Activated CD8-positive, alpha-beta T cell treated with anti-CD3 and anti-CD28 coated beads for 36 hours (primary cell): ENCODE measurements at regions of chr5 and their contacts with region 1.

Region 1: GRCh38 chr5:95781101-95781583 is 41.4 kb downstream of the GLRX start:
- DNase-seq: peak; percentile 86
- ATAC-seq: peak; percentile 98
- H3K4me3 Mint-ChIP-seq: peak overlapping the region; percentile 38
- H3K27ac Mint-ChIP-seq: peak overlapping the region; percentile 71
- H3K4me1 Mint-ChIP-seq: peaks cover 7% of the 10 kb centered on the region
- H3K27me3 Mint-ChIP-seq: peaks cover 2% of the 10 kb centered on the region
- CTCF ChIP-seq: peak; percentile 99

Region 2: DNA sequence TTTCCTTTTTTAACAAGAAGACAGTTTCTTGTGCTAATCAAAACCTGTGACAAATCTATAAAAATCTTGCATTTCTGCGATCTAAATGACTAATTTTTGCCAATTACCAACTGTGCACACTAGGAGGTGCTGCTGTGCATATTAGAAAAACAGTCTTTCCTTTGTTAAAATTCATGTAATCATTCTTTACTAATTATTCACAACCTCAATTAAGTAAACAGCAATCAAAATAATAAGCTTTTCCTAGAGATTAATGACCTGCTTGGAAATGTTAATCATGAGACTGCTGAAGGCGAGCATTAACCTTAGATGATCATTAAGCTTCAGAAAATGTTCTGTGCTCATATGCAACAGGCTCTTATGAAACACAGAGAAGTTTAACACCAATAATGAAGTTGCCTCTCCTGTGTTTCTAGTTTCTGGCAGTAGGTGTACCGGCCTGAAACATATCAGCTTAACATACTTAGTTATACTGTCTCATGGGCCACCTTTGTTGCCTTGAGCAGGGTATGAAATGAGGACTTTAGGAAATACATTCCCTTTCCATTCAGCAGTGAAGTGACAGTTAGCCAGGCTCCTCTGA is 116.8 kb before region 1 on chr5:
- CTCF ChIA-PET with region 1: interaction called, 25 read pairs
- POLR2A ChIA-PET with region 1: no interaction called
- intact Hi-C with region 1: loop called (anchors 5 kb)
- DNase-seq: peak; percentile 52
- ATAC-seq: peak; percentile 61
- H3K4me3 Mint-ChIP-seq: no peak overlapping the region
- H3K27ac Mint-ChIP-seq: no peak overlapping the region
- H3K4me1 Mint-ChIP-seq: peaks cover 3% of the 10 kb centered on the region
- H3K27me3 Mint-ChIP-seq: no peaks in the 10 kb centered on the region
- CTCF ChIP-seq: peak; percentile 92

Region 3: DNA sequence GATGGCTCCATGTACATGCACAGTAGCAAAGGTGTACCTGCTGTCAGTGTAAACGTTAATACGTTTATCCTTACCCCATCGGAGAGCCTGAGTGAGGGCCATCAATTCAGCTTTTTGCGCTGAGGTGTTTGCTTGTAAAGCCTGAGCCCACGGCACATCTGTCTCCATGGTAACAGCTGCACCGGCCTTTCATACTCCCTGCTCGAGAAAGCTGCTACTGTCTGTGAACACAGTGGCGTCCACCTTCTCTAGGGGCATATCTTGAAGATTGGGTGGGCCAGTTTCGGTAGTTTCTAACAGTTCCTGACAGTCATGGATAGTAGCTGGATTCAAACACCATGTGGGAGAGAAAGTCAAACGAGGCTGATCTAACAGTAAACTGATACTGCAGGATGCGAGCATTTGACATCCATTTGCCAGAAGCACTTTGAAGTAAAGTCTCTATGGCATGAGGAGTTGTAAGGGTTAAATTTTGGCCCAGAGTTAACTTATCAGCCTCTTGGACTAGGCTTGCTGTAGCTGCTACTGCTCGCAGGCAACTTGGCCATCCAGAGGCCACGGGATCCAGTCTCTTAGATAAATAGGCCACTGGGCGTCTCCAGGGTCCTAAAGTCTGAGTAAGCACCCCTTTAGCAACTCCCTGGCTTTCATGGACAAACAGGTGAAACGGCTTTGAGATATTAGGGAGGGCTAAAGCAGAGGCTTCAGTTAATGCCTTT is 71.0 kb before region 1 on chr5:
- CTCF ChIA-PET with region 1: no interaction called
- POLR2A ChIA-PET with region 1: no interaction called
- intact Hi-C with region 1: no loop called
- DNase-seq: no peak
- ATAC-seq: no peak
- H3K4me3 Mint-ChIP-seq: no peak overlapping the region
- H3K27ac Mint-ChIP-seq: no peak overlapping the region
- H3K4me1 Mint-ChIP-seq: peaks cover 8% of the 10 kb centered on the region
- H3K27me3 Mint-ChIP-seq: peaks cover 6% of the 10 kb centered on the region
- CTCF ChIP-seq: no peak

Region 4: GRCh38 chr5:95760273-95761191 is 20.6 kb before region 1 on chr5:
- CTCF ChIA-PET with region 1: interaction called, 14 read pairs
- POLR2A ChIA-PET with region 1: no interaction called
- intact Hi-C with region 1: no loop called
- DNase-seq: peak; percentile 51
- ATAC-seq: peak; percentile 89
- H3K4me3 Mint-ChIP-seq: peak overlapping the region; percentile 66
- H3K27ac Mint-ChIP-seq: peak overlapping the region; percentile 90
- H3K4me1 Mint-ChIP-seq: peaks cover 29% of the 10 kb centered on the region
- H3K27me3 Mint-ChIP-seq: no peaks in the 10 kb centered on the region
- CTCF ChIP-seq: no peak

Region 5: DNA sequence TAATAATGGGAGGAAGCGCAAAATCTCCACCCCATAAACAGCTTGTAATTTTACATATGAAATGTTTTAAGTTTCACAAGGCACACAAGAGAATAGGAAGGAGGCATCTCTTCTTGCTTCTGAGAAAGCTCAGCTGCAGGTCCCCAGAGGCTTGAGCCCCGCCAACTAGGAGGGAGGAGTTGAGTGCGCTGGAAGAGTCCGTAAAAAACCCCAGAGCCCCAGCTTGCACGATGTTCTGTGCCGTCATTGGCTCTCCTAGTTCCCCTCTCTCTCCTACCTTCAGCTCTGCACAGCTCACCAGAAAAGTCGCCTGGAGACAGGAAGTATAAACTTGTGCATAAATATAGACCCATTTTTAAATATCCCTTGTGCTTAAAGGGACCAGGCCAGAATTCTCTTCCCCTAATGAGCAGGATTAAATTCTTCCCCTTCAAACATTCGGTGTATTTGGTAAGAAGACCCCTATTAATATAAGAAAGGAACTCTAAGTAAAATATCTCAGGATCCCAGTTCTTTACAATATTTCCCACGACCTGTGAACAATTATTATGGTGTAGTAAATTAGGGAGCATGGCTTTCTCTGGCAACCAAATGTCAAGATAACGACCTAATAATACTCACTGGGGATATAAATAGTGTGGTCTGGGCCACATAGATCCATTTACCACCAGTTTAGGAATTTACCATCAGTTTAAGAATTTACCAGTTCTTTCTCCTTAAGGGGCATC is 27.7 kb after region 1 on chr5:
- CTCF ChIA-PET with region 1: interaction called, 58 read pairs
- POLR2A ChIA-PET with region 1: no interaction called
- intact Hi-C with region 1: no loop called
- DNase-seq: peak; percentile 90
- ATAC-seq: peak; percentile 99
- H3K4me3 Mint-ChIP-seq: peak overlapping the region; percentile 52
- H3K27ac Mint-ChIP-seq: peak overlapping the region; percentile 86
- H3K4me1 Mint-ChIP-seq: peaks cover 56% of the 10 kb centered on the region
- H3K27me3 Mint-ChIP-seq: no peaks in the 10 kb centered on the region
- CTCF ChIP-seq: no peak

Region 6: DNA sequence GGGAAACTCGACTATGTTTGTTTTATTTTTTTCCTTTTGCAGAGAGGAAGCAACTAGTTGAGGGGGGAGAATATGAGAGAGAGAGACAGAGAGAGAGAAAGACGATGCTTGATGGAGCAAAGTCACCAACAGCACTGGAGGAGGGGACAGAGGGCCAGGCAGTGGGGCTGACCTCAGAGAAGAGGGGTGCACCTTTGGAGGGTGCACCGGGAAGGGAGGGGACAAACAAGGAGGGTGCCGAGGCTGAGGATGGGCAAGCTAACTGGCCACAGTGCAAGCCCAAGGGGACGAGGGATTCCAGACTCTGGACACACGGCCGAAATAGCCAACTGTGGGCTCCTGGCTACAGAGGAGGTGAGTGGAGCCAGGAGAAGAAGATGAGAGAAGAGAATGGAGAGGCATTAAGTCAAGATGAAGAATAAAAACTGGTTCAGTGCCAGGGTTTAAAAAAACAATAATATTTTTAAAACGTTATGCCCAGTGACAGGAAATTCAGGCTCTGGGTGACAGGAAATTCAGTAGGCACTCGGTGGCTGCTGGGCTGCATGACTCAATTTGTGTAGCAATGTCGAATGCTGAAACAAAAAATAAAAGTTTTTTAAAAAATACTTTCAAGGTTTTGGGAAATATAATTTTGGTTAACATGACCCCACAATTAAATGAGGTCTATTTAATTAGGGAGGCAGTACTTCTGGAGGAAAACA is 54.7 kb after region 1 on chr5:
- CTCF ChIA-PET with region 1: interaction called, 628 read pairs
- POLR2A ChIA-PET with region 1: no interaction called
- intact Hi-C with region 1: no loop called
- DNase-seq: peak; percentile 41
- ATAC-seq: no peak
- H3K4me3 Mint-ChIP-seq: peak overlapping the region; percentile 74
- H3K27ac Mint-ChIP-seq: peak overlapping the region; percentile 93
- H3K4me1 Mint-ChIP-seq: peaks cover 40% of the 10 kb centered on the region
- H3K27me3 Mint-ChIP-seq: no peaks in the 10 kb centered on the region
- CTCF ChIP-seq: no peak

Region 7: DNA sequence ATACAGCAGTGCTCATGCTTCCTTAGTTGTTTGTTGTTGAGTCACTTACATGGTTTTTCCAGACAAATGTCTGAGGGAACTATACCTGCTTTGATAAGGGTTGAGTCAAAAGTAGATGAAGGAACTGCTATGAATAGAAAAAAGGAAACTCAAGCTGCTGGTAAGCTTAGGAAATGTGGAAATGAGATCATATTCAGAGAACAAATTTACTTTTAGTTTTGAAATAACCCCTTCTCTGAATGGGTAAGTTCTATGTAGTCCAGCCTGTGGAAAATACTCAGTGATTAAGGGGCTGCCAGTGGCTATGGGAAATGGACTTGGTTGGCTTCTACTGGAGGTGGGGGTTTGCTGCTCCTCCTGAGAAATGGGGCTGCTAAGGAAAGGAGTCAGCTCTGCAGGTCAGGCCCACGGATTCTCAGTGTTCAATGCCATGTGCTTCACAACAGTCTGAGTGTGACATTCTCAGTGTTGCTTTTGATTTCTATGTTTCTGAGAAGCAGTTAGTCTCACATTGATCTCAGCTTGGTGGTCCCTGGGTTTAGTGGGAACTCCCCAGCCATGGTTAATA is 89.0 kb after region 1 on chr5:
- CTCF ChIA-PET with region 1: interaction called, 13 read pairs
- POLR2A ChIA-PET with region 1: no interaction called
- intact Hi-C with region 1: no loop called
- DNase-seq: peak; percentile 82
- ATAC-seq: peak; percentile 82
- H3K4me3 Mint-ChIP-seq: peak overlapping the region; percentile 65
- H3K27ac Mint-ChIP-seq: peak overlapping the region; percentile 100
- H3K4me1 Mint-ChIP-seq: peaks cover 52% of the 10 kb centered on the region
- H3K27me3 Mint-ChIP-seq: no peaks in the 10 kb centered on the region
- CTCF ChIP-seq: no peak